RWPE1 (cell line): ENCODE measurements at regions of chr19 and their contacts with region 1.

Region 1: GRCh38 chr19:41310033-41310758 is at the start of gene CCDC97:
- DNase-seq: peak; percentile 95
- H3K27ac ChIP-seq: peak within 1 kb of the TSS; percentile 97
- CTCF ChIP-seq: no peak

Region 2: GRCh38 chr19:40055832-40056504 is 1254.2 kb before region 1 on chr19 and contains the start of gene ZNF780B:
- CTCF ChIA-PET with region 1: no interaction called
- POLR2A ChIA-PET with region 1: no interaction called
- DNase-seq: peak; percentile 63
- H3K27ac ChIP-seq: peak within 1 kb of the TSS; percentile 66
- CTCF ChIP-seq: no peak

Region 3: GRCh38 chr19:41351339-41352245 is 41.4 kb after region 1 on chr19:
- CTCF ChIA-PET with region 1: interaction called, 10 read pairs
- POLR2A ChIA-PET with region 1: no interaction called
- DNase-seq: peak; percentile 86
- H3K27ac ChIP-seq: peak overlapping the region; percentile 84
- CTCF ChIP-seq: no peak

Region 4: GRCh38 chr19:41409288-41409687 is 99.1 kb after region 1 on chr19:
- CTCF ChIA-PET with region 1: no interaction called
- POLR2A ChIA-PET with region 1: no interaction called
- DNase-seq: peak; percentile 43
- H3K27ac ChIP-seq: peak overlapping the region; percentile 42
- CTCF ChIP-seq: no peak